ENCODE measurements at regions of chr1 and their contacts with region 1.

Region 1: DNA sequence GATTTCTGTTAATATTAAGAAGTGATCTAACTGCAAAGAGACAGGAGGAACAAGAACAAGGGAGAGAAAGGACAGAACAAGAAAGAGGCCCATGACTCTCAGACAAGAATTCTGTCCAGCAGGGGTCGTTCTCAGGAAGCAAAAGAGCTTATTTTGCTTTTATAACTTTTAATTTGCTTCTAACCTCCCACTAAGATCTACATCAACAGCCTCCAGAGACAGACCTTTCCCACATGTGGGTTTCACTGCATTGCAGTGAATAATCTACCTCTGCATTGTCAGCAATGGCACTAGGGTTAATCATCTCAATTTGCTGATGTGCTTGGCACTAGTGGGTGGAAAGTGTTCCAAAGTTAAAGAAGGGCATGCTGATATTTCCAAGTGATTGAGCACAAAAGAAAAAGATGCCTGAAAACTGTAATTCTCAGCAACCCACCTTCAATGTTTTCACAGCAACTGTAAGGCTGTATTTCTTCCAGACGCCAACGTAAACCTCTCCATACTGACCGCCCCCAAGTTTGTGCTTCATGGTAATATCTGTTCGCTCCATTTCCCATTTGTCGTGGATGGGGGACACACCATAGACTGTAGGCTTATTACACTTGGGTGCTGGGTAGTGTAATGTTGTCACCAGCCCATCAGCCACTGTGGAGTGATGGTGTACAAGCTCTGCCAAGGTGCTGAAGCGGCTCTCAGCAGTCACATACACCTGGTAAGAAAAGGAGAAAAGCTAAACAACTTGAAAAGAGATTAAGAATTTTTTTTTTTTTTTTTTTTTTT is 39.5 kb downstream of the TOR3A start:
- DNase-seq: no peak
- H3K4me3 ChIP-seq: no peak overlapping the region
- H3K27ac ChIP-seq: no peak overlapping the region
- H3K27me3 ChIP-seq: no peaks in the 10 kb centered on the region
- CTCF ChIP-seq: peak; percentile 72

Region 2: GRCh38 chr1:179137623-179138255 is 16.4 kb after region 1 on chr1:
- CTCF ChIA-PET with region 1: interaction called, 15 read pairs
- POLR2A ChIA-PET with region 1: no interaction called
- DNase-seq: no peak
- H3K4me3 ChIP-seq: peak overlapping the region; percentile 27
- H3K27ac ChIP-seq: peak overlapping the region; percentile 66
- H3K27me3 ChIP-seq: no peaks in the 10 kb centered on the region
- CTCF ChIP-seq: peak; percentile 9; the same call in 1 of the 2 replicates

Region 3: DNA sequence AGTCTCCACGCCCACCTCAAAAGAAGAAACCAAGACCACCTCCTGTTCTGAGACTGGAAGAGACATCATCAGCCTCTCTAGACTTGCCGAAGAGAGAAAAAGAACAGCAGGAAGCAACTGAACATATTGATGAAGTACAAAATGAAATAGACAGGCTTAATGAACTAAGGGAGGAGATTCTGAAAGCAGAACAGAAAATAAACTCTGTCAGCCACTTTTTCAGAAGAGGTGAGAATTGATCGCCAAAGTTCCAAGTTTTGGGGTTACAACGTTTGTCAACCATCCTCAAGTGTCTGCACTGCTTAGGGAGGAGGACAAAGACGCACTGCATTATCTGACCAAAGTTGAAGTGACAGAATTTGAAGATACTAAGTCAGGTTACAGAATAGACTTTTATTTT is 62.5 kb after region 1 on chr1:
- CTCF ChIA-PET with region 1: interaction called, 33 read pairs
- POLR2A ChIA-PET with region 1: no interaction called
- DNase-seq: no peak
- H3K4me3 ChIP-seq: no peak overlapping the region
- H3K27ac ChIP-seq: no peak overlapping the region
- H3K27me3 ChIP-seq: no peaks in the 10 kb centered on the region
- CTCF ChIP-seq: no peak

Region 4: DNA sequence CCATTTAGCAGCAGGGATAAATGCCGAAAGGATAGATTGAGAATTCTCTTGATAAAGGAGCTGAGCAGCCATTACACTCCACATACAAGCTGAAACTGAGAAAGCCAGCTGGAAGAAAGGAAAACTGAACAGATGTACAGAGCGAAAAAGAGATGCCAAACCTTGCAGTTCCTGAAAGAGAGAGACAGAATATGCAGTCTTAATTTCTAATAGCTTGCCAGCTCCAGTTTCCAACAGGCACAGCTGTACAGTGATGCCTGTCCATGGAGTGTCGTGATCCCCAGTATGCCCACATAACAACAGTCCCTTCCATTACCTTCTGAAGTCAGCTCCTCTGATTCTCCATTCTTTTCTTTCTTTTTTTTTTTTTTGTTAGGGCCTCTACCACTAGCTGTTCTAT is 85.5 kb after region 1 on chr1:
- CTCF ChIA-PET with region 1: interaction called, 12 read pairs
- POLR2A ChIA-PET with region 1: no interaction called
- DNase-seq: no peak
- H3K4me3 ChIP-seq: no peak overlapping the region
- H3K27ac ChIP-seq: no peak overlapping the region
- H3K27me3 ChIP-seq: no peaks in the 10 kb centered on the region
- CTCF ChIP-seq: no peak

Region 5: DNA sequence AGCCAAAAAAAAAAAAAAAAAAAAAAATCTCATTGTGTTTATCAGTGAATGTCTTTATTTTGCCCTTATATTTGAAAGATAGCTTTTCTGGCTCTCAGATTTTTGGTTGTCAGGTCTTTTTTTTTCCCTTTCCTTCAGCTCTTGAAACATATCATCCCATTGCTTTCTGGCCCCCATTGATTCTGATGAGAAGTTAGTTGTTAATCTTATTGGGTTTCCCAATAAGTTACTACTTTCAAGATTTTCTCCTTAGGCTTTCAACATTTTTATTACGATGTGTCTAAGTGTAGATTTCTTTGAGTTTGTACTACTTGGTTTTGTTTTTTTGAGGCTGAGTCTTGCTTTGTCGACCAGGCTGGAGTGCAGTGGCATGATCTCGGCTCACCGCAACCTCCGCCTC is 157.6 kb after region 1 on chr1:
- CTCF ChIA-PET with region 1: interaction called, 13 read pairs
- POLR2A ChIA-PET with region 1: no interaction called
- DNase-seq: no peak
- H3K4me3 ChIP-seq: no peak overlapping the region
- H3K27ac ChIP-seq: no peak overlapping the region
- H3K27me3 ChIP-seq: no peaks in the 10 kb centered on the region
- CTCF ChIP-seq: no peak

Region 6: DNA sequence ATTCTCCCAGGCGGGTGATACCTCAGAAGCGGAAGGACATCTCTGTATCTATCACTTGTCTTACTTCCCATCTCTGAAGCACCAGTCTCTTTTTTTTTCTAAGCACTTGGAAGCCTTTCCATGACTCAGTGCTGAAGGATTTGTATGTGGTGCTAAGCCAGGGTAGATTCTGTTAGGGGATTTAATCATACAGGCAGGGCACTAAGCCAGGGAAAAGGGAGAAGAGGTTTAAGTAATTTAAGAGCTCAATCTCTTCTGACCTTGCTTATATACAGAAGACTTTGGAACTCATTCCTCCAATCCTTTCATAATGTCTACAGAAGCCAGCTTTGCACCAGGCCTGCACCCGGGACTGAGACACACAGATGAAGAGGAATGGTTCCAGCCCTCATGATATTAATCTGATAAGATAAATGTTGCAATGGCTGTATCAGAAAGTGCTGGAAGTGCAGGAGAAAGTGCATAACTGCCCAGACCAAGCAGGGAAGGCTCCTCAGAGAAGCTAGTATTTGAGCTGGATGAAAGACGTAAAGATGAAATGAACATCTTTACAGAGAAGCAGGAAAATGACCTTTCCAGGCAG is 632.8 kb after region 1 on chr1:
- CTCF ChIA-PET with region 1: no interaction called
- POLR2A ChIA-PET with region 1: no interaction called
- DNase-seq: peak; percentile 44
- H3K4me3 ChIP-seq: no peak overlapping the region
- H3K27ac ChIP-seq: no peak overlapping the region
- H3K27me3 ChIP-seq: peaks cover 2% of the 10 kb centered on the region
- CTCF ChIP-seq: no peak